ENCODE measurements at regions of chr5 and their contacts with region 1.

Region 1: DNA sequence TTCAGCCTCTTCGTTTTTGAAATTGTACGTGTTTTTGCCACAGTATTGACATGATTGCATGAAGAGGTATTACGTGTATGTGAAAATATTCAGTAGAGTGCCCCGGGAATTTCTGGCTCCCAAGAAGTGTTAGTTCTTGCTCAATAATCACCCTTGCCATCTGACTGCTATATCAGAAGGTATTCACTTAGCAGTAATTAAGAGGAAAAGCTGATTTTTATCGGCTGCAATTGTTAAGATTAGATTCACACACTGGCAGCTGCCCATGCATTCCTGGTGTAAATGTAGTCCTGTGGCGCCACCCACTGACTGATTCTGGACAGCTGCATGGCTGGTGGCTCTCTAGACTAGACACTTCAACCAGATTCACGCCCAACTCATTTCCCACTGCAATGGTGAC is 440.1 kb upstream of the ADAMTS16 start:
- H3K4me3 ChIP-seq: no peak overlapping the region
- H3K27ac ChIP-seq: no peak overlapping the region
- H3K4me1 ChIP-seq: no peaks in the 10 kb centered on the region
- CTCF ChIP-seq: no peak; the same call in 1 of the 2 replicates

Region 2: DNA sequence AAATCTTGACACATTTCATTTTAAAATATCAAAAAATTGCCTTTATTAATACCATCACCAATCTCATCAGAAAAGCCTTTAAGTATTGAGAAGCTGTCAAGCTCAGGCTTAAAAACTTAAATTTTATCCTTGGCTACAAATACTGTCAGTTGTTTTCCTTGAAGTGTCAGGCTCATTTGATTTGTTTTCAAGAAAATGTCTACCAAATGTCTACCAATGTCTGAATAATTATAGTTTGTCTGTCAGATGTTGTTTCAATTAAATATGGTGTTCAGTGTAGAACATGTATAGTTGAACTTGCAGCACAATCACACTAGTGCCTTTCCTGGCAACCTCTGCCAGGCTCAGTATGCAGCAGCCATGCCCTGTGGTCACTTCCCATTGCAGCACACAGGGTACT is 15.1 kb before region 1 on chr5:
- CTCF ChIA-PET with region 1: interaction called, 10 read pairs
- POLR2A ChIA-PET with region 1: no interaction called
- H3K4me3 ChIP-seq: no peak overlapping the region
- H3K27ac ChIP-seq: no peak overlapping the region
- H3K4me1 ChIP-seq: no peaks in the 10 kb centered on the region
- CTCF ChIP-seq: no peak